Common myeloid progenitor, CD34-positive (primary cell): ENCODE measurements at regions of chr18 and their contacts with region 1.

Region 1: GRCh38 chr18:74116633-74117554 is 30.7 kb downstream of the FBXO15 start:
- DNase-seq: peak; percentile 22 to 53 (median 48)
- H3K4me3 ChIP-seq: no peak overlapping the region
- H3K27ac ChIP-seq: no peak overlapping the region
- H3K4me1 ChIP-seq: no peaks in the 10 kb centered on the region
- H3K27me3 ChIP-seq: peaks cover 0 to 4% (median 0%) of the 10 kb centered on the region in 5 experiments

Region 2: GRCh38 chr18:73852789-73853549 is 263.9 kb before region 1 on chr18:
- CTCF ChIA-PET with region 1: no interaction called
- POLR2A ChIA-PET with region 1: no interaction called
- DNase-seq: no peak
- H3K4me3 ChIP-seq: no peak overlapping the region
- H3K27ac ChIP-seq: no peak overlapping the region
- H3K4me1 ChIP-seq: no peaks in the 10 kb centered on the region
- H3K27me3 ChIP-seq: no peaks in the 10 kb centered on the region

Region 3: DNA sequence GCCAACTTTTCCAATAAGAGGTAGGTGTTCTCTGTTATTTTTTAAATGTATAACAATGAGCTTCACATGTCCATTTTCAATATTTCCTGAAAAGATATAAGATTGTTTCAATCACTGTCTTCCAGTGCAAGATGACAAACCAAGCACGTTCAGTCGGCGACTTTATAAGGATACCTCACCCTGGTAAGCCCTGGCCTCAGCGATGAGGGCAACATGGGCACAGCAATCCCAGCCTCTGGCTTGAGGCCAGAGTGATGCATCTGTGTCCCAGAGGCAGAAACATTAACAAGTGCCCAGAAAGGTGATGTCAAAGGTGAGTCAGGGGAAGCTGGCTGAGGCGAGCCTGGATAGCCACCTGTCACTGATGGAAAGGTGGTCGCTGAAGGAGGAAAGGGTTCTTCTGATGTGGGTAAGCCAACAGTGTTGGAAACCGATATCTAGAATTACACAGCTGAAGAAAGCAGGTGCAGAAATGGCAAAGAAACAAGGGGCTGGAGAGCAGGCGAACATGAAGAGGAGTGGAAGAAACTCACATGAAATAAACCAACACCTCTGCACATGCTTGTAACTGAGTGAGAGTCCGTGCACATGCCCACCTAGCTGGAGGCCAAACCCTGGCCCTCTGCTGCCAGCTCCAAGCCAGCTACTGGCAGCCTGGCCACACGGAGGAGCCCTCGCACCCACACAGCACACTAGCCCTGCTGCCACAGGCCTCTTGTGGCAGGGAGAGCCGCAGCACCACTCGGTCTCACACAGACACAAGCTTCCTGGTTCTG is 34.7 kb before region 1 on chr18:
- CTCF ChIA-PET with region 1: interaction called, 11 read pairs
- POLR2A ChIA-PET with region 1: no interaction called
- DNase-seq: peak; percentile 63 to 83 (median 76)
- H3K4me3 ChIP-seq: peak overlapping the region in 2 of 7 experiments; percentile 27 to 37
- H3K27ac ChIP-seq: no peak overlapping the region
- H3K4me1 ChIP-seq: peaks cover 0 to 6% (median 3%) of the 10 kb centered on the region in 4 experiments
- H3K27me3 ChIP-seq: no peaks in the 10 kb centered on the region